Prostate gland (tissue), 2 donors: ENCODE measurements at regions of chr2 and their contacts with region 1.

Region 1: GRCh38 chr2:162297925-162298552 is 20.4 kb downstream of the IFIH1 start:
- DNase-seq: peak; percentile 76
- H3K4me3 ChIP-seq: no peak overlapping the region
- H3K27ac ChIP-seq: no peak overlapping the region
- H3K4me1 ChIP-seq: no peaks in the 10 kb centered on the region
- H3K27me3 ChIP-seq: no peaks in the 10 kb centered on the region
- CTCF ChIP-seq: peak; percentile 59 to 79 (median 70)
- POLR2A ChIP-seq: no peak

Region 2: DNA sequence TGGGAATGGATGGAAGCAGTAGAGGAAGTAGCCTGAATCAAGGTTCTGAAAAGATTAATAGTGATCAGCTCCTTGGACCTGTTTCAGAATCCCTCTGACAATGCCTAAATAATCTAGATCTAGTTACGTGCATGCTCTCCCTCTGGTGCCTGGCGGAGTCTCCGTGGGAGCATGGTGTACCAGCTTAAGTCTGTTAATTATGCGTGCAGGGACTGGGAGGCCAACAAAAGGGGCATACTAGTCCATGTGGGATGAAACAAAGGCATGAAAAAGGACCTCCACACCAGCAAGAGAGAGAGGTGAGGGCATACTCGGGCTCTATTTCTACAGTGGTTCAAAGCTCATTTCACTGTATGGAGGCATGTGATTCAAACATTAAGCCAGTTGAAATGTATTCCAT is 424.3 kb before region 1 on chr2:
- intact Hi-C with region 1: no loop called
- DNase-seq: no peak
- H3K4me3 ChIP-seq: no peak overlapping the region
- H3K27ac ChIP-seq: no peak overlapping the region
- H3K4me1 ChIP-seq: no peaks in the 10 kb centered on the region
- H3K27me3 ChIP-seq: no peaks in the 10 kb centered on the region
- CTCF ChIP-seq: no peak
- POLR2A ChIP-seq: no peak

Region 3: DNA sequence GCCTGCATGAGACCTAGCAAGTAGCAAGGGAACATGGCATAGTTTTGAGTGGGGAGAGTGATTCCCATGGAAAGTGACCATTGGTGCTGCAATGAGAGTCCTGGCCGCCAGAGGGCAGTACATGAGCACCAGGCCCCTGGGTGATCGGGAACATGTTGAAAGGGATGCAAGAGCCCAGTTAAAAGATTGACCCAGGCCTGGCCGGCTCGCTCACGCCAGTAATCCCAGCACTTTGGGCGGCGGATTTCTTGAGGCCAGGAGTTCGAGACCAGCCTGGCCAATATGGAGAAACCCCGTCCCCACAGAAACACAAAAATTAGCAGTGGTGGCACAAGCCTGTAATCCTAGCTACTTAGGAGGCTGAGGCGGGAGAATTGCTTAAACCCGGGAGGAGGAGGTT is 77.0 kb before region 1 on chr2:
- intact Hi-C with region 1: loop called (anchors 5 kb)
- DNase-seq: peak; percentile 20
- H3K4me3 ChIP-seq: no peak overlapping the region
- H3K27ac ChIP-seq: no peak overlapping the region
- H3K4me1 ChIP-seq: no peaks in the 10 kb centered on the region
- H3K27me3 ChIP-seq: no peaks in the 10 kb centered on the region
- CTCF ChIP-seq: peak; percentile 62 to 70 (median 62)
- POLR2A ChIP-seq: no peak